ENCODE measurements at regions of chr7 and their contacts with region 1.

Region 1: DNA sequence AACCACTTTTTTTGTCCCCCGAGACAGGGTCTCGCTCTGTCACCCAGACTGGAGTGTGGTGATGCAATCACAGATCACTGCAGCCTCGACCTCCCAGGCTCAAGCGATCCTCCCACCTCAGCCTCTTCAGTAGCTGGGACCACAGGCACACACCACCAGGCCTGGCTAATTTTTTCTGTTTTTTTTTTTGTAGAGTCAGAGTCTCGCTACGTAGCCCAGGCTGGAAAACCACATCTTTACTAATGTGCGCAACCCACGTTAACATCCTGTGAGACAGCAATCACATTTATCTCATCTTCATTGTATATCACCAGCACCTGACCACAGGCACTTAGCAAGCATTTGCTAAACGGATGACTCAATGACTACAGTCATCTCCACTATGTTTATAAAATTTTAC is 77.8 kb upstream of the ATP6V0A4 start:
- DNase-seq: no peak
- ATAC-seq: no peak
- H3K4me3 ChIP-seq: no peak overlapping the region
- H3K27ac ChIP-seq: no peak overlapping the region
- H3K4me1 ChIP-seq: no peaks in the 10 kb centered on the region
- H3K27me3 ChIP-seq: no peaks in the 10 kb centered on the region
- CTCF ChIP-seq: no peak
- EP300 ChIP-seq: no peak
- POLR2A ChIP-seq: no peak
- RAD21 ChIP-seq: no peak

Region 2: GRCh38 chr7:139058943-139059342 is 183.1 kb after region 1 on chr7:
- CTCF ChIA-PET with region 1: no interaction called
- POLR2A ChIA-PET with region 1: interaction called, 10 read pairs
- RAD21 ChIA-PET with region 1: interaction called, 3 read pairs
- SMC1A ChIA-PET with region 1: no interaction called
- in situ Hi-C with region 1: no loop called
- intact Hi-C with region 1: no loop called
- DNase-seq: no peak
- ATAC-seq: no peak
- H3K4me3 ChIP-seq: no peak overlapping the region
- H3K27ac ChIP-seq: no peak overlapping the region
- H3K4me1 ChIP-seq: no peaks in the 10 kb centered on the region
- H3K27me3 ChIP-seq: no peaks in the 10 kb centered on the region
- CTCF ChIP-seq: no peak
- EP300 ChIP-seq: no peak
- POLR2A ChIP-seq: no peak
- RAD21 ChIP-seq: no peak